Activated B cell treated with CpG ODN at 0.5 μM for 24 hours (primary cell): ENCODE measurements at regions of chr17 and their contacts with region 1.

Region 1: GRCh38 chr17:43620581-43620980 is 41.1 kb downstream of the MEOX1 start:
- DNase-seq: no peak
- ATAC-seq: no peak
- H3K4me3 Mint-ChIP-seq: no peak overlapping the region
- H3K27ac Mint-ChIP-seq: no peak overlapping the region
- H3K4me1 Mint-ChIP-seq: no peaks in the 10 kb centered on the region
- H3K27me3 Mint-ChIP-seq: peaks cover 10% of the 10 kb centered on the region
- CTCF ChIP-seq: no peak

Region 2: GRCh38 chr17:44522883-44523671 is 902.5 kb after region 1 on chr17:
- CTCF ChIA-PET with region 1: no interaction called
- POLR2A ChIA-PET with region 1: interaction called, 10 read pairs
- intact Hi-C with region 1: no loop called
- DNase-seq: no peak
- ATAC-seq: no peak
- H3K4me3 Mint-ChIP-seq: no peak overlapping the region
- H3K27ac Mint-ChIP-seq: no peak overlapping the region
- H3K4me1 Mint-ChIP-seq: no peaks in the 10 kb centered on the region
- H3K27me3 Mint-ChIP-seq: peaks cover 7% of the 10 kb centered on the region
- CTCF ChIP-seq: no peak